ENCODE measurements at regions of chr15 and their contacts with region 1.

Region 1: DNA sequence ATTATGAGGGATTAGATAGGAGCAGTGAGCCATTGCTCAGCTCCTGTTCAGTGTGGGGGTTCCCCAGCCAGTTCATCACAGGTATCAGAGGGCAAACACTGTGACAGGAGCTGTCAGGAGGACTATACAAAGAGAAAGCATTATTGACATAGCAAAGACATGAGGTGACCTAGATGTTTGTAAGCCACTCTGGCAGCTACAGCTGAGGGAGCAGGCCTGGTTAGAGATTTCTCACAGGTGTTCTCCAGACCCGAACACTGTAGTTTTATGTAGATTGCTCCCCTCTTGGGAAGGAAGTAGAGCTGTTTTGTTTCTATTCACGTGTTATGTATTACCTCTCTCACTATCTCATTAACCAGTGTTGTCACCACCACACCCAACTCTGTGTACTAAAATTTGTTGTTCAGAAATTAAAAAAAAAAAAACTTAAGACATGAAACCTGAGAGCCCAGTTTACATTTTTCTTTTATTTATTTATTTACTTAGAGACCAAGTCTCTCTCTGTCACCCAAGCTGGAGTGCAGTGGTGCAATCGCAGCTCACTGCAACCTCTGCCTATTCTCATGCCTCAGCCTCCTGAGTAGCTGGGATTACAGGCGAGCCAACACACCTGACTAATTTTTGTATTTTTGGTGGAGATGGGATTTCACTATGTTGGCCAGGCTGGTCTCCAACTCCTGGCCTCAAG is 123.7 kb downstream of the RBPMS2 start:
- DNase-seq: peak; percentile 57
- H3K4me3 Mint-ChIP-seq: no peak overlapping the region
- H3K27ac Mint-ChIP-seq: peak overlapping the region; percentile 26
- H3K4me1 Mint-ChIP-seq: peaks cover 40% of the 10 kb centered on the region
- H3K27me3 Mint-ChIP-seq: no peaks in the 10 kb centered on the region

Region 2: GRCh38 chr15:64430000-64430735 is 221.5 kb before region 1 on chr15:
- CTCF ChIA-PET with region 1: interaction called, 29 read pairs
- POLR2A ChIA-PET with region 1: no interaction called
- intact Hi-C with region 1: loop called (anchors 5 kb)
- DNase-seq: peak; percentile 45
- H3K4me3 Mint-ChIP-seq: no peak overlapping the region
- H3K27ac Mint-ChIP-seq: peak overlapping the region; percentile 75
- H3K4me1 Mint-ChIP-seq: peaks cover 35% of the 10 kb centered on the region
- H3K27me3 Mint-ChIP-seq: no peaks in the 10 kb centered on the region

Region 3: DNA sequence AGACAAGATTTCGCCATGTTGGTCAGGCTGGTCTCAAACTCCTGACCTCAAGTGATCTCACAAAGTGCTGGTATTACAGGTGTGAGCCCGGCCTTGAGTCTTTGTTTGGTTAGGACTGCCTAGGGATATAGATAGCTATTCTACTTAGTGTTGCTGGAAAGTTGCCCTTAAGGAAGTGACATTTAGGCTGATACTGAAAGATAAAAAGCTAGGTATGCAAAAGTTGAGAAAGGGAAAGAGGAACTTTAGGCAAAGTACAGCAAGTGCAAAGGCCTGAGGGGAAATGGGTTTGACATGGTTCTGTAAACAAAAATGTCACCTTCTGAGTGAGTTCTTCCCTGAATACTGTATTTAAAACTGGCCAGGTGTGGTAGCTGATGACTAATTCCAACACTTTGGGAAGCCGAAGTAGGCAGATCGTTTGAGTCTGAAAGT is 79.8 kb before region 1 on chr15:
- CTCF ChIA-PET with region 1: no interaction called
- POLR2A ChIA-PET with region 1: no interaction called
- intact Hi-C with region 1: no loop called
- DNase-seq: no peak
- H3K4me3 Mint-ChIP-seq: no peak overlapping the region
- H3K27ac Mint-ChIP-seq: peak overlapping the region; percentile 55
- H3K4me1 Mint-ChIP-seq: peaks cover 50% of the 10 kb centered on the region
- H3K27me3 Mint-ChIP-seq: no peaks in the 10 kb centered on the region

Region 4: DNA sequence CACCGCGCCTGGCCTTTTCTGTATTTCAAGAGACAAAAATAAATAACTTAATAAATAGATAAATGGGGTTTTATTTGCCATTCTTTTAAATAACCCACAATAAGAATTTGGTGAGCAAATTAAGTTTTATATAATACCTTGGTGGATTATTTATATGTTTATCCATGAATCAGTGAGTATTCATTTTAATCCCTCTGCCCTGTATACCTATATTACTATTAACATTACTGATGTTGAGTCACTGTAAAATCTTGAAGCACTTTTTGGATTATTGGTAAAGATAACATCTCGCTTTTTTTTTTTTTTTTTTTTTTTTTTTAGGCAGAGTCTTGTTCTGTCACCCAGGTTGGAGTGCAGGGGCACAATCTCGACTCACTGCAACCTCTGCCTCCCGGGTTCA is 37.2 kb before region 1 on chr15:
- CTCF ChIA-PET with region 1: no interaction called
- POLR2A ChIA-PET with region 1: no interaction called
- intact Hi-C with region 1: no loop called
- DNase-seq: no peak
- H3K4me3 Mint-ChIP-seq: no peak overlapping the region
- H3K27ac Mint-ChIP-seq: no peak overlapping the region
- H3K4me1 Mint-ChIP-seq: peaks cover 47% of the 10 kb centered on the region
- H3K27me3 Mint-ChIP-seq: no peaks in the 10 kb centered on the region

Region 5: DNA sequence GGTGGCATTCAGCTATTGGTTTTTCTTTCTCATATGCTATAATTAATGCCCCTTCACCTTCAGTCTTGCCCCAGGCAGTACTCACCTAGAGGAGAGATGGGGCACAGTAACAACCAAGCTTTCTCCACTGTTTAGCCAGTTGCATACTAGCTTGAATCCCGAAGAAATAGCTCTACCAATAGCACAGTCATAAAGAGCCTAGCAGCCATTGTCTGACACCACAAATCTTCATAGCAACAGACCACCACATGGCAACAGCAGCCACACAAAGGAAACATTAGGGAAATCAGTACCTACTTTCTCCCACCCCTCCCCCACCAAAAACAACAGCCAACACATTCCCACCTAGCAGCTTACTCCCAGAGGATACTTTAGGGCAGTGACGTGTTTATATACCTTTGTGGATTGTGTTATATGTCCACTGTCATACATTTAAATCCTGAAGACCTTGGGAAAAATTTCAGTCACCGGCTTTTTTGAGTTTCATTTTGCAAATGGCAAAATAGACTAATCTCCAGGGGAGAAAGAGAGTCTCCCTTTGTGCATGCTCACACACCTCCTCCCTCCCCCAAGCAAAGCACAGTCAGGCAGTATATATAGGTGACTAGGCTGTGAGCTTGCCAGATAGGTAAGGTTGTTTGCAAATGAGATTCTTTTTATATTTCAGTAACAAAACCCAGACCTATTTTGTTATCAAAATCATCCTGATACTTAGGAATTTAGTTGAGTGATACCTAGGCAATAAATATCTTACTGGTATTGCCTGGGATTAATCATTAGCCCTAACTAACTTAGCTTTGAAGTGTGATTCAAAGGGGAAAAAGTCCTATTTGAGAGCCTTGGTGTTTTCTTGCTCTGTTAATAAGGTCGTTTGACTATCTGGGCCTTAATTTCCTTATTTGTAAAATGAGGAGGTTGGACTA is 16.9 kb before region 1 on chr15:
- CTCF ChIA-PET with region 1: interaction called, 12 read pairs
- POLR2A ChIA-PET with region 1: interaction called, 7 read pairs
- intact Hi-C with region 1: loop called (anchors 2 kb)
- DNase-seq: peak; percentile 69
- H3K4me3 Mint-ChIP-seq: no peak overlapping the region
- H3K27ac Mint-ChIP-seq: peak overlapping the region; percentile 72
- H3K4me1 Mint-ChIP-seq: peaks cover 58% of the 10 kb centered on the region
- H3K27me3 Mint-ChIP-seq: no peaks in the 10 kb centered on the region